A549 (cell line): ENCODE measurements at regions of chr4 and their contacts with region 1.

Region 1: GRCh38 chr4:25986807-25987206 is 72.8 kb downstream of the SMIM20 start:
- DNase-seq: no peak
- ATAC-seq: no peak
- H3K4me3 ChIP-seq: no peak overlapping the region
- H3K27ac ChIP-seq: no peak overlapping the region
- H3K4me1 ChIP-seq: no peaks in the 10 kb centered on the region
- CTCF ChIP-seq: no peak
- EP300 ChIP-seq: no peak
- POLR2A ChIP-seq: no peak
- RAD21 ChIP-seq: no peak

Region 2: GRCh38 chr4:25958110-25958509 is 28.7 kb before region 1 on chr4:
- CTCF ChIA-PET with region 1: interaction called, 18 read pairs
- POLR2A ChIA-PET with region 1: no interaction called
- DNase-seq: no peak
- ATAC-seq: no peak
- H3K4me3 ChIP-seq: no peak overlapping the region
- H3K27ac ChIP-seq: no peak overlapping the region
- H3K4me1 ChIP-seq: no peaks in the 10 kb centered on the region
- CTCF ChIP-seq: no peak
- EP300 ChIP-seq: no peak
- POLR2A ChIP-seq: no peak
- RAD21 ChIP-seq: no peak

Region 3: DNA sequence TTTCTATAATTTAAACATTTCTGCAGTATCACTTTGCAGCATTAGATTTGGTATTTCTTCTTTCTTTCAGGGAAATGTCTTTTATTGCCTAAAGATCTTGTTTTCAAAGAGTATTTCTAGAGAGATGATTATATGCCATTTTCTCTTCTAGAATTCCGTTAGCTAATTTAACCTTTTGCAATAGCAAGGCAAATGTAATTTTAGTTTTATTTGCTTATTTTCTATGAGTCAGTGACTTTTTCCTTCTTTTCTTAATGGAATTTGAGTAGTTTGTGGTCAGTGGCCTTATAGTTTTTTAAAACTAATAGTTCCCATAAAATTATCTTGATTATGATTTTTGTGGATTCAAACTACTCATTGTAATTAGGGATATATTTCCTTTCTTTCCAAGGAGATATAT is 431.3 kb after region 1 on chr4:
- CTCF ChIA-PET with region 1: interaction called, 21 read pairs
- POLR2A ChIA-PET with region 1: no interaction called
- DNase-seq: no peak
- ATAC-seq: no peak
- H3K4me3 ChIP-seq: no peak overlapping the region
- H3K27ac ChIP-seq: no peak overlapping the region
- H3K4me1 ChIP-seq: no peaks in the 10 kb centered on the region
- CTCF ChIP-seq: no peak
- EP300 ChIP-seq: no peak
- POLR2A ChIP-seq: no peak
- RAD21 ChIP-seq: no peak